ENCODE measurements at regions of chr16 and their contacts with region 1.

Region 1: GRCh38 chr16:88743693-88744576 is 37.6 kb downstream of the CTU2 start:
- DNase-seq: peak; percentile 84 to 89
- ATAC-seq: peak; percentile 63 to 84 (median 73)
- H3K4me3 ChIP-seq: no peak overlapping the region
- H3K27ac ChIP-seq: no peak overlapping the region
- H3K4me1 ChIP-seq: no peaks in the 10 kb centered on the region
- H3K27me3 ChIP-seq: peaks cover 0 to 9% (median 3%) of the 10 kb centered on the region in 3 donors
- CTCF ChIP-seq: peak; percentile 82

Region 2: GRCh38 chr16:88785106-88785924 is 41.4 kb after region 1 on chr16 and contains the start of gene PIEZO1:
- intact Hi-C with region 1: loop called (anchors 2 to 5 kb)
- DNase-seq: peak; percentile 81 to 83
- ATAC-seq: peak; percentile 55 to 67 (median 57)
- H3K4me3 ChIP-seq: peak within 1 kb of the TSS; percentile 74
- H3K27ac ChIP-seq: peak within 1 kb of the TSS; percentile 61
- H3K4me1 ChIP-seq: peaks cover 7% of the 10 kb centered on the region
- H3K27me3 ChIP-seq: peaks cover 0 to 40% (median 12%) of the 10 kb centered on the region in 3 donors
- CTCF ChIP-seq: peak; percentile 64
- total RNA-seq, gene PIEZO1: 8.8 to 12.6 (median 10.9) TPM

Region 3: DNA sequence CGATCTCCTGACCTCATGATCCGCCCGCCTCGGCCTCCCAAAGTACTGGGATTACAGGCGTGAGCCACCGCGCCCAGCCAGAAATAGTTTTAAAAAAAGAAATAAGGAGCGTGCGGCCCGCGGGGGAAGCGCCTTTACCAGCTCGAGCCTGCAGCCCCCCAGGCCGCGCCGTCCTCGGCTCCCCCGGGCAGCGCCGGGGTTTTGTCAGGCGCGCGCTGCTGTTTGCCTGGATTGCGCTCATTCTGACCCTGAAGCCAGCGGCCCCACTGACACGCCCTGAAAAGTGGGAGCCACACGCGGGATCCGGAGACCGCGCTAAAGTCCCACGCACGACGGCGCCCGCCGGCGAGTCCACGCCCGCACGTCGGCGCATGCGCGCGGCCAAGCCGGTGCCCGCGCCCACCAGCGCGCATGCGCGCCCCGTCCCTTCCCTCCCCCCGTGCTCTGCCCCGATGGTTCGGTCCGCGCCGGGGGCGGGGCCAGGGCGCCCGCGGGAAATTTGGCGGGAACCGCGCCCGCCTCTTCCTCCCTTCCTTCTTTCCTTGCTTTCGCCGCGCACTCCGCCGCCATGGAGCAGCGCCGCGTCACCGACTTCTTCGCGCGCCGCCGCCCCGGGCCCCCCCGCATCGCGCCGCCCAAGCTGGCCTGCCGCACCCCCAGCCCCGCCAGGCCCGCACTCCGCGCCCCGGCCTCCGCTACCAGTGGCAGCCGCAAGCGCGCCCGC is 59.5 kb after region 1 on chr16 and contains the start of gene CDT1:
- intact Hi-C with region 1: loop called in 1 of 2 experiments (anchors 5 kb)
- DNase-seq: peak; percentile 81 to 92
- ATAC-seq: peak; percentile 68 to 87 (median 80)
- H3K4me3 ChIP-seq: peak within 1 kb of the TSS; percentile 74
- H3K27ac ChIP-seq: no peak within 1 kb of the TSS
- H3K4me1 ChIP-seq: no peaks in the 10 kb centered on the region
- H3K27me3 ChIP-seq: peaks cover 0 to 6% (median 0%) of the 10 kb centered on the region in 3 donors
- CTCF ChIP-seq: no peak
- total RNA-seq, gene CDT1: 0.17 to 0.59 (median 0.25) TPM in 3 of 4 donors, not detected in the other

Region 4: DNA sequence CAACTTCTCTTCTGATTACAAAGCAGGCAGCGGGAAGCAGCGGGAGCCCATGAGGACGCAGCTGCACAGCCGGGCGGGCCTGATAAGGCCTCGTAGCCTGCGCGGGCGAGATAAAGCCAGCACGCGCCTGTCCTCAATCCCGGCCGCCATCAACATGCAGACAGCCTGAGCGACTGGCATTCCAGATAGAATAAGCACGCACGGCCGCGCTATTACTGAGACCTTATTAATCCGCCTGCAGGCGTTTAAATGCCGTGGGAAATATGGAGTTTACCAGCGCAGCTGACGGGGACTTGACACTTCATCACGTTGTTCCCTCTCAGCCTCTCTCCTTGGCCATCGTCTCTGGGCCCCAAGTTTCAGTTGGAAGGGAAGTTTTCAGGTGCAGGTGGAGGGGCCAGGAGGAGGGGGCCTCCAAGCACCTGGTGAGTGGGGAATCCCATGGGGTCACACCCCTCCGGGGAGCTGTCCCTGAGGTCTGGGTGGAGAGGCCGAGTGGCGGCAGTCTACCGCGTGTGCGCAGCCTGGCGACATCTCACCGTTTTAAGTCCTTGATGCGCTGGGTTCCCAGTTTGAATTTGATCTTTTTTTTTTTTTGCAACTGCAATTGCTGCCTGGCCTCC is 260.4 kb after region 1 on chr16:
- intact Hi-C with region 1: no loop called
- DNase-seq: no peak
- ATAC-seq: no peak
- H3K4me3 ChIP-seq: no peak overlapping the region
- H3K27ac ChIP-seq: no peak overlapping the region
- H3K4me1 ChIP-seq: no peaks in the 10 kb centered on the region
- H3K27me3 ChIP-seq: peaks cover 0 to 52% (median 11%) of the 10 kb centered on the region in 3 donors
- CTCF ChIP-seq: no peak

Measured in psoas muscle (tissue), 8 donors.